ENCODE measurements at regions of chr16 and their contacts with region 1.

Region 1: DNA sequence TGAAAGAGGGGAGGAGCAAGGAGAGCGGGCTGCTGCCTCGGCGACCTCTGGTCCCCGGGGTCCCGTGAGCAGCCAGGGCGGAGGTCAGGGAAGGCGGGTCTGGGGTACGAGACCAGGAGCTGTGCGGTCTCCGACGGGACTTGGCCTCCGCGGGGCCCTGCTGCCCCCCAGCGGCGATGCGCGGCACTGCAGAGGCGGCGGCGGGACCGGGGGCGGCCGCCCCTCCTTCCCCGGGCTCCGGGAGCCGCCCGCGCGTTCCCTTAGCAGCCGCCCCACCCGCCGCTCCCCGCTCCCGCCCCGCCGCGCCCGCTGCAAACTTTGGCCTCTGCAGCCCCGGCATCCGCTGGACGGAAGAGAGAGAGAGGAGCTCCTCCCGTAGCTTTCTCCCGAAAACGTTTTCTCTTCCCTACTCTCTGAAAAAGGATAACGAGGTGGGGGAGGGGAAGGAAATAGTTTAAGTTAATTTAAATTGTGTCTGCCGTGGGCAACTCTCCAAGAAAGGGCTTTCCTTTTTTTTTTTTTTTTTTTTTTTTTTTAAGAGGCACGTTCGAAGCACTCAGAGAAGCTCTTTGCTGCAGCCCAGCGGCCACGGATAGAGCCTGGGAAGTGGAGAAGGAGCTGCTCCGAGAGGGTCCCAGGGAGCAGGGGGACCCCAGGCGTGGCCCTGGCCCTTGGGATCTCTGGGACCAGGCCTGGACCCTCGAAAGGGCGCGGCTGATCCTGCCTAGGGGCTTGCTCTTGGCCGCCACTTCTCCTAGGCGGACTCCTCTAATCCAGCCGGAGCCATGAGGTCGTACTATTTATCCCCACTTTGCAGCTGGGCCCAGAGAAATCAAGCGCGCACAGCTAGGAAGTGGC is 43.2 kb downstream of the C16orf82 start:
- DNase-seq: no peak
- H3K4me3 ChIP-seq: peak overlapping the region; percentile 54
- CTCF ChIP-seq: peak; percentile 90

Region 2: GRCh38 chr16:25279491-25279890 is 1830.4 kb before region 1 on chr16:
- CTCF ChIA-PET with region 1: interaction called, 17 read pairs
- POLR2A ChIA-PET with region 1: interaction called, 3 read pairs
- DNase-seq: no peak
- H3K4me3 ChIP-seq: no peak overlapping the region
- CTCF ChIP-seq: no peak

Region 3: GRCh38 chr16:25838724-25839186 is 1271.1 kb before region 1 on chr16:
- CTCF ChIA-PET with region 1: interaction called, 18 read pairs
- POLR2A ChIA-PET with region 1: no interaction called
- DNase-seq: peak; percentile 3
- H3K4me3 ChIP-seq: no peak overlapping the region
- CTCF ChIP-seq: peak; percentile 55

Region 4: GRCh38 chr16:27127308-27127707 is 17.4 kb after region 1 on chr16:
- CTCF ChIA-PET with region 1: interaction called, 12 read pairs
- POLR2A ChIA-PET with region 1: no interaction called
- DNase-seq: peak; percentile 60
- H3K4me3 ChIP-seq: no peak overlapping the region
- CTCF ChIP-seq: no peak

Measured in AG04449 (cell line).